Mammary epithelial cell (primary cell): ENCODE measurements at regions of chr18 and their contacts with region 1.

Region 1: DNA sequence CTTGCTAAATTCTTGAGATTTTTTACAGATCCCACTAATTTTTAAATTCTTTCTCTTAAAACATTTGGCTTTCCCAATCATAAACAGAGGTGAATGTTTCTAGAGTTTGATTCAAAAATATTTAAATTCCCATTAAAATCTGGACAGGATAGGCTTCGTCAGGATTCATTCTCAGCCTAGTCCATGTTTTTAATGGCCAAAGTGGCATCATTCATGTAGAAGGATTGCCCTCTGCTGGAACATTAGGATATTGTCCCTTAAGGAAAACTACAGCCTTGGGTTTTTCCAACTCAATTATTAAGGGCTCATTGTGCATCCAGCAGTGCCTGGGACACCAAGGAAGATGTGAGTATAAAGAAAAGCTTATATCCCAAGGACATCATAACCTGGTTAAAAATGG is 71.7 kb downstream of the TPGS2 start:
- DNase-seq: peak; percentile 40
- H3K4me3 ChIP-seq: no peak overlapping the region
- H3K27ac ChIP-seq: no peak overlapping the region
- H3K4me1 ChIP-seq: peaks cover 7% of the 10 kb centered on the region
- H3K27me3 ChIP-seq: no peaks in the 10 kb centered on the region
- CTCF ChIP-seq: peak; percentile 63 to 73

Region 2: GRCh38 chr18:36284671-36285295 is 472.3 kb before region 1 on chr18:
- CTCF ChIA-PET with region 1: no interaction called
- dilution Hi-C with region 1: no loop called
- in situ Hi-C with region 1: no loop called
- intact Hi-C with region 1: loop called (anchors 2 kb)
- DNase-seq: peak; percentile 56
- H3K4me3 ChIP-seq: no peak overlapping the region
- H3K27ac ChIP-seq: no peak overlapping the region
- H3K4me1 ChIP-seq: no peaks in the 10 kb centered on the region
- H3K27me3 ChIP-seq: no peaks in the 10 kb centered on the region
- CTCF ChIP-seq: peak; percentile 81 to 86

Region 3: GRCh38 chr18:36419905-36420531 is 337.1 kb before region 1 on chr18:
- CTCF ChIA-PET with region 1: no interaction called
- dilution Hi-C with region 1: no loop called
- in situ Hi-C with region 1: no loop called
- intact Hi-C with region 1: loop called (anchors 10 kb)
- DNase-seq: peak; percentile 84
- H3K4me3 ChIP-seq: no peak overlapping the region
- H3K27ac ChIP-seq: no peak overlapping the region
- H3K4me1 ChIP-seq: peaks cover 30% of the 10 kb centered on the region
- H3K27me3 ChIP-seq: no peaks in the 10 kb centered on the region
- CTCF ChIP-seq: peak; percentile 47 to 64

Region 4: GRCh38 chr18:36620788-36621187 is 136.3 kb before region 1 on chr18:
- CTCF ChIA-PET with region 1: no interaction called
- dilution Hi-C with region 1: no loop called
- in situ Hi-C with region 1: no loop called
- intact Hi-C with region 1: loop called (anchors 5 kb)
- DNase-seq: no peak
- H3K4me3 ChIP-seq: no peak overlapping the region
- H3K27ac ChIP-seq: no peak overlapping the region
- H3K4me1 ChIP-seq: peaks cover 14% of the 10 kb centered on the region
- H3K27me3 ChIP-seq: no peaks in the 10 kb centered on the region
- CTCF ChIP-seq: peak; percentile 13 to 32